Activated B cell treated with CpG ODN at 0.5 μM for 24 hours (primary cell): ENCODE measurements at regions of chr9 and their contacts with region 1.

Region 1: GRCh38 chr9:136902259-136902821 is 16.0 kb downstream of the TRAF2 start:
- DNase-seq: peak; percentile 69
- ATAC-seq: peak; percentile 85
- H3K4me3 Mint-ChIP-seq: peak overlapping the region; percentile 72
- H3K27ac Mint-ChIP-seq: peak overlapping the region; percentile 95
- H3K4me1 Mint-ChIP-seq: peaks cover 63% of the 10 kb centered on the region
- H3K27me3 Mint-ChIP-seq: no peaks in the 10 kb centered on the region
- CTCF ChIP-seq: no peak

Region 2: DNA sequence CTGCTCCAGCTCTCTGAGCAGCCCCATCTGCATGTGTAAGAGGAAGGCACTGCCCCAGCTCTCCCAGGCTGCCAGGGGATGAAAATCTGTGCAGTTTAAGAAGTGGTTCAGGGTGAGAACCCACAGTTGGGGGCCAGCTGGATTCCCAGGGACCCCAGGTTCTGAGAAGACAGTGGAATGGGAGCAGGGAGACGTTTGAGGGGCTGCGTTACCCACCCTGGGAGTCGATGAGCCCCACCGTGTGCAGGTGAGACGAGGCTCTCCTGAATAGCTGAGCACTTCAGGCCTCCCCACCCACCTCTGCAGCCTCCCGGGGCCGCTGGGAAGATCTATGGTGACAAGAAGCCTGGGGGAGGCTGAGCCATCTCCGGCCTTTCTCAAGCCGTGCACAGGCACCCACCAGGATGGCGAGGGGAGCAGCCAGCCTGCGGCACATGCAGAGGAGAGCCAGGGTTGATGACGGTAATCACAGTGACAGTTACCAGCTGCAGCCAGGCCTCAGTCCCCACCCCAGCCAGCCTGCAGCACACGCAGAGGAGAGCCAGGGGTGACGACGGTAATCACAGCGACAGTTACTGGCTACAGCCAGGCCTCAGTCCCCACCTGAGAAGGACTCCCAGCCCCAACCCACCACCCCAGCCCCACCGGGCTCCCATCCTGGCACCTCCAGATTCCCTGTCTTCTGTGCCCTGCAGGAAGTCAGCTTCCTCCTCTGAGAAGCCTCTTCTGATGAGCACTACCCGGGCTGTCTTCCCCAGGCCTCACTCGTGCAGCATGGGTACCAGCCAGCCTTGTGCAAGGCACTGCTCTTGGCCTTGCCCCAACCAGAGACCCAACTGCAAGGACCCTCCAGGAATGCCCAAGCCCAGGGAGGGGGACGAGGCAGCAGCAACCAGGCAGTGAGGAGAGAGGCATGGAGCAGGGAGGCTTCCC is 1573.6 kb before region 1 on chr9:
- CTCF ChIA-PET with region 1: no interaction called
- POLR2A ChIA-PET with region 1: no interaction called
- intact Hi-C with region 1: no loop called
- DNase-seq: no peak
- ATAC-seq: no peak
- H3K4me3 Mint-ChIP-seq: no peak overlapping the region
- H3K27ac Mint-ChIP-seq: no peak overlapping the region
- H3K4me1 Mint-ChIP-seq: no peaks in the 10 kb centered on the region
- H3K27me3 Mint-ChIP-seq: no peaks in the 10 kb centered on the region
- CTCF ChIP-seq: no peak

Region 3: GRCh38 chr9:136865735-136866103 is 36.6 kb before region 1 on chr9:
- CTCF ChIA-PET with region 1: no interaction called
- POLR2A ChIA-PET with region 1: interaction called, 20 read pairs
- intact Hi-C with region 1: loop called (anchors 5 kb)
- DNase-seq: no peak
- ATAC-seq: no peak
- H3K4me3 Mint-ChIP-seq: peak overlapping the region; percentile 89
- H3K27ac Mint-ChIP-seq: peak overlapping the region; percentile 78
- H3K4me1 Mint-ChIP-seq: peaks cover 15% of the 10 kb centered on the region
- H3K27me3 Mint-ChIP-seq: no peaks in the 10 kb centered on the region
- CTCF ChIP-seq: no peak

Region 4: DNA sequence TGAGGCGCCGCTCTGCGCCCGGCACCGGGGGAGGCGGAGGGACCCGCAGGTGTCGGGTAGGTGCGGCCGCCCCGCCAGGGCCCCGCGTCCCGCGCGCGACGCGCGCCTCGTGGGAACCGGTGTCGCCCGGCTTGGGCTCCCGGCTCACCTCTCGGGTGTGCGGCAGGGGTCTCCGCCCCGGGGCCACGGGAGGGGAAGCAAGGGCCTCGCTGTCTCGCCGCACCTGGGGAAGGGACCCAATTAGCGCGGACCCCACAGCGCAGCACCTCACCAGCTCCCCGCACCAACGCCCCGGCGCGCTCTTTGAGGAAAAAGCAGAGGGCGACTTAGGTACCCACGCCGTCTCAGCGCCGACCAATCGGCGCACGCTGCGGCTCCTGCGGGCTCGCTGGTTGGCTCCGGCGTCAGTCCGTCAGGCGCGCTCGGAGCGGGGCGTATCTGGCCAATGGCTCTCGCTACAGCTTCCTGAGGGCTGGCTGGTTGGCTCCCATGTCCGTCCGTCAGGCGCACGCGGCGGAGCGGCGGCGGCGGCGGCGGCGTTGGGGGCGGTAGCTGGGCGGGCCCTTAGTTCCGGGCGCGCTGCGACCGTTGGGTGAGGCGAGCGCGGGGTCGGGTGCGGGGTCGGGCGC is 16.3 kb before region 1 on chr9 and contains the start of gene TRAF2:
- CTCF ChIA-PET with region 1: interaction called, 5 read pairs
- POLR2A ChIA-PET with region 1: interaction called, 95 read pairs
- intact Hi-C with region 1: loop called (anchors 1 kb)
- DNase-seq: peak; percentile 95
- ATAC-seq: peak; percentile 89
- H3K4me3 Mint-ChIP-seq: peak within 1 kb of the TSS; percentile 91
- H3K27ac Mint-ChIP-seq: peak within 1 kb of the TSS; percentile 88
- H3K4me1 Mint-ChIP-seq: peaks cover 44% of the 10 kb centered on the region
- H3K27me3 Mint-ChIP-seq: no peaks in the 10 kb centered on the region
- CTCF ChIP-seq: no peak
- total RNA-seq, gene TRAF2: 49.7 and 58.2 TPM in 2 replicates

Region 5: GRCh38 chr9:136944519-136945279 is 42.4 kb after region 1 on chr9 and contains the starts of genes C8G and FBXW5:
- CTCF ChIA-PET with region 1: interaction called, 6 read pairs
- POLR2A ChIA-PET with region 1: interaction called, 9 read pairs
- intact Hi-C with region 1: loop called (anchors 1 kb)
- DNase-seq: peak; percentile 97
- ATAC-seq: peak; percentile 90
- H3K4me3 Mint-ChIP-seq: peak within 1 kb of the TSS; percentile 80
- H3K27ac Mint-ChIP-seq: peak within 1 kb of the TSS; percentile 79
- H3K4me1 Mint-ChIP-seq: peaks cover 9% of the 10 kb centered on the region
- H3K27me3 Mint-ChIP-seq: no peaks in the 10 kb centered on the region
- CTCF ChIP-seq: peak; percentile 48
- total RNA-seq, gene C8G: 0.69 and 3.4 TPM in 2 replicates
- total RNA-seq, gene FBXW5: 81.5 and 82.1 TPM in 2 replicates

Region 6: GRCh38 chr9:136978073-136978864 is 75.9 kb after region 1 on chr9:
- CTCF ChIA-PET with region 1: no interaction called
- POLR2A ChIA-PET with region 1: no interaction called
- intact Hi-C with region 1: no loop called
- DNase-seq: no peak
- ATAC-seq: peak; percentile 75
- H3K4me3 Mint-ChIP-seq: no peak overlapping the region
- H3K27ac Mint-ChIP-seq: no peak overlapping the region
- H3K4me1 Mint-ChIP-seq: no peaks in the 10 kb centered on the region
- H3K27me3 Mint-ChIP-seq: peaks cover 29% of the 10 kb centered on the region
- CTCF ChIP-seq: no peak

Region 7: GRCh38 chr9:137034863-137035761 is 132.8 kb after region 1 on chr9:
- CTCF ChIA-PET with region 1: no interaction called
- POLR2A ChIA-PET with region 1: interaction called, 11 read pairs
- intact Hi-C with region 1: no loop called
- DNase-seq: peak; percentile 82
- ATAC-seq: peak; percentile 65
- H3K4me3 Mint-ChIP-seq: peak overlapping the region; percentile 67
- H3K27ac Mint-ChIP-seq: peak overlapping the region; percentile 75
- H3K4me1 Mint-ChIP-seq: peaks cover 47% of the 10 kb centered on the region
- H3K27me3 Mint-ChIP-seq: no peaks in the 10 kb centered on the region
- CTCF ChIP-seq: no peak